ENCODE measurements at regions of chr10 and their contacts with region 1.

Region 1: DNA sequence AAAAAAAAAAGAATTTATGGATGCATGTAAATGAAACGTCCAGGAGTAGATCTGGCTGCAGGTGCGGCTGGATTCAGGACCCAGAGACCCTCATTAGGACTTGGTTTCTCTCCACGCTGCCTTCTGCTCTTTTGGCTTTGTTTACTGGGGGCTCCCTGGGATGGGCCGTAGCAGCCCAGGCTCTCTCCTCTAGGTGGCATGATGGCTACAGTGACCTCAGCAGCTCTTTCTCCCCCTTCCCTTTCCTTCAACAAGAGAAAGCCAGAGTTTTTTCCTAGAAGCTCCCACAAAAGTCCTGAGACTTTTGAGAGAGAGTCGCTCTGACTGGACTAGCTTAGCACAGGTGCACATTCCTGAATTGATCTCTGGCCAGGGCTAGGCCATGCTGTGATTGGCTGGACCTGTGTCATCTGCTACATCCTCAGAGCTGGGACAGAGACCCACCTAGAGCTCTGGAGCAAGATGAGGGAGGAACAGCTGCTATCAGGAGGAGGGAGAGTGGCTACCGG is 67.8 kb upstream of the PDCD4 start:
- DNase-seq: peak; percentile 60 to 87
- H3K4me3 ChIP-seq: no peak overlapping the region
- H3K27ac ChIP-seq: peak overlapping the region; percentile 53 to 70 (median 62)
- H3K4me1 ChIP-seq: peaks cover 20 to 35% (median 29%) of the 10 kb centered on the region in 4 donors
- H3K27me3 ChIP-seq: no peaks in the 10 kb centered on the region
- CTCF ChIP-seq: peak in 5 of 7 experiments; percentile 47 to 77 (median 68)
- EP300 ChIP-seq: no peak
- POLR2A ChIP-seq: no peak

Region 2: GRCh38 chr10:110893559-110894179 is 89.8 kb after region 1 on chr10:
- intact Hi-C with region 1: loop called (anchors 10 kb)
- DNase-seq: peak in 1 of 2 donors; percentile 66
- H3K4me3 ChIP-seq: no peak overlapping the region
- H3K27ac ChIP-seq: no peak overlapping the region
- H3K4me1 ChIP-seq: peaks cover 0 to 77% (median 38%) of the 10 kb centered on the region in 4 donors
- H3K27me3 ChIP-seq: no peaks in the 10 kb centered on the region
- CTCF ChIP-seq: peak in 4 of 7 experiments; percentile 36 to 66 (median 54)
- EP300 ChIP-seq: no peak
- POLR2A ChIP-seq: no peak